Activated CD4-positive, alpha-beta memory T cell treated with anti-CD3 and anti-CD28 coated beads for 36 hours (primary cell): ENCODE measurements at regions of chr20 and their contacts with region 1.

Region 1: DNA sequence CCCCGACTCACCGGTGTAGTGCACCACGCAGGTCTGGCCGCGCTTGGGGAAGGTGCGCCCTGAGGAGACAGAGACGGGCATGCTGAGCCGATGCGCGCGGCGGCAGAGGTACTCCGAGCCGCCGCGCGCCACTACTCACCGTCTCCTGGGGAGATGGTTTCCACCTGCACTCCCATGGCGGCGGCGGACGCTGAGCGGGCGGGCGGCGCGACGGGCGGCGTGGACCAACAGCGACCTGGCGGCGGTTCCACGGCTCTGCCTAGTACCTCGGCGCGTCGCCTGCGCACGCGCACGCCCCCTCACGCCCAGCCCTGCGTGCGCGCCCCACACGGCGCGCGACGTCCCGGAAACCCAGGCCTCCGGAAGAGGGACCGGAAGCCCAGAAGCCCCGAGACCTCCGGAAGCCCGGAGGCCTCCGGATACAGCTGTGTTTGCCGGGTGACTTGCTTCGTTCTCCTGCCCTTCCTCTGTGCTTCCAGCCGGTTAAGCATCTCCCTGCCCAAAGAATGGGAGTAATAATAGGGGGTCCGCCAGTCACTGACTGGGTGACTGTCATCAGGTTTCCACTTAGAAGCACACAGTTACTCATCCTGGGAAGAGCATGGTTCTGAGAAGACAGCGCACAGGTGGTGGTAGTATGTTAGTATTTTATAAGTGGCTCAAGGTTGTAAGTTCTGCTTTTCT is at the start of gene FKBP1A:
- DNase-seq: peak; percentile 95
- H3K4me3 Mint-ChIP-seq: peak within 1 kb of the TSS; percentile 94
- H3K27ac Mint-ChIP-seq: peak within 1 kb of the TSS; percentile 92
- H3K4me1 Mint-ChIP-seq: peaks cover 49% of the 10 kb centered on the region
- H3K27me3 Mint-ChIP-seq: no peaks in the 10 kb centered on the region
- total RNA-seq, gene FKBP1A: 247 to 252 TPM

Region 2: GRCh38 chr20:1118336-1119127 is 274.4 kb before region 1 on chr20 and contains the start of gene PSMF1:
- CTCF ChIA-PET with region 1: no interaction called
- POLR2A ChIA-PET with region 1: no interaction called
- intact Hi-C with region 1: loop called (anchors 1 kb)
- DNase-seq: peak; percentile 97
- H3K4me3 Mint-ChIP-seq: peak within 1 kb of the TSS; percentile 89
- H3K27ac Mint-ChIP-seq: peak within 1 kb of the TSS; percentile 84
- H3K4me1 Mint-ChIP-seq: peaks cover 57% of the 10 kb centered on the region
- H3K27me3 Mint-ChIP-seq: no peaks in the 10 kb centered on the region
- total RNA-seq, gene PSMF1: 140 to 149 TPM

Region 3: GRCh38 chr20:1266167-1266973 is 126.6 kb before region 1 on chr20 and contains the start of gene SNPH:
- CTCF ChIA-PET with region 1: no interaction called
- POLR2A ChIA-PET with region 1: no interaction called
- intact Hi-C with region 1: loop called (anchors 5 kb)
- DNase-seq: peak; percentile 86
- H3K4me3 Mint-ChIP-seq: peak within 1 kb of the TSS; percentile 89
- H3K27ac Mint-ChIP-seq: peak within 1 kb of the TSS; percentile 85
- H3K4me1 Mint-ChIP-seq: peaks cover 42% of the 10 kb centered on the region
- H3K27me3 Mint-ChIP-seq: no peaks in the 10 kb centered on the region
- total RNA-seq, gene SNPH: 3.4 to 4.3 TPM

Region 4: GRCh38 chr20:1325173-1326030 is 67.6 kb before region 1 on chr20:
- CTCF ChIA-PET with region 1: interaction called, 10 read pairs
- POLR2A ChIA-PET with region 1: interaction called, 27 read pairs
- intact Hi-C with region 1: loop called (anchors 1 kb)
- DNase-seq: peak; percentile 99
- H3K4me3 Mint-ChIP-seq: no peak overlapping the region
- H3K27ac Mint-ChIP-seq: no peak overlapping the region
- H3K4me1 Mint-ChIP-seq: peaks cover 23% of the 10 kb centered on the region
- H3K27me3 Mint-ChIP-seq: no peaks in the 10 kb centered on the region

Region 5: DNA sequence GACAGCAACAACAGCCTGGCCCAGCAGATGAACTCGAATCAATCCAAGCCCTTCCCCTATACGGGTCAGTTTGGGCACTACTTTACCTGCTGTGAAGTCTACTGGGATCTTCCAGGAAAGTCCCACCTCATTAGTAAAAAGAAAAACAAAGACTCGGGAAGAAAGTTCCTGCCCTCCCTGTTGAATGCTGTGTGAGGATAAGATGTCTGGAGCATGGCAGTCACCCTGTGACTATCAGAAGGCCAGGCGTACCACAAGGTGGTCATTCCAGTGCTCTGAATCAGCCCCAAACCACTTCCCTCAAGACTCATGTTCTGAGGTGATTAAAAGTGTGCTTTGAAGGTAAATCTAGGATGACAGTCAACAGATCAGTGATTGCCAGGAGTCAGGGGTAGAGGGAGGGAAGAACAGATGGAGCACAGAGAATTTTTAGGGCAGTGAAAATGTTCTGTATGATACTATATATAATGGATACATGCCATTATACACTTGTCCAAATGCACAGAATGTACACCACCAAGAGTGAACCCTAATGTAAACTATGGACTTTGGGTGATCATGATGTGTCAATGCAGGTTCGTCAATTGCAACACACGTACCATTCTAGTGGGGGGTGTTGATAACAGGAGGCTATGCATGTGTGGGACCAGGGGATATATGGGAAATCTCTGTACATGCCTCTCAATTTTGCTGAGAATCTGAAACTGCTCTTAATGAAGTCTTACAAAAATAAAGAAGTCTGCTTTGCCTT is 14.8 kb before region 1 on chr20:
- CTCF ChIA-PET with region 1: interaction called, 7 read pairs
- POLR2A ChIA-PET with region 1: interaction called, 13 read pairs
- intact Hi-C with region 1: loop called (anchors 1 kb)
- DNase-seq: peak; percentile 66
- H3K4me3 Mint-ChIP-seq: peak overlapping the region; percentile 34
- H3K27ac Mint-ChIP-seq: peak overlapping the region; percentile 95
- H3K4me1 Mint-ChIP-seq: peaks cover 84% of the 10 kb centered on the region
- H3K27me3 Mint-ChIP-seq: no peaks in the 10 kb centered on the region

Region 6: DNA sequence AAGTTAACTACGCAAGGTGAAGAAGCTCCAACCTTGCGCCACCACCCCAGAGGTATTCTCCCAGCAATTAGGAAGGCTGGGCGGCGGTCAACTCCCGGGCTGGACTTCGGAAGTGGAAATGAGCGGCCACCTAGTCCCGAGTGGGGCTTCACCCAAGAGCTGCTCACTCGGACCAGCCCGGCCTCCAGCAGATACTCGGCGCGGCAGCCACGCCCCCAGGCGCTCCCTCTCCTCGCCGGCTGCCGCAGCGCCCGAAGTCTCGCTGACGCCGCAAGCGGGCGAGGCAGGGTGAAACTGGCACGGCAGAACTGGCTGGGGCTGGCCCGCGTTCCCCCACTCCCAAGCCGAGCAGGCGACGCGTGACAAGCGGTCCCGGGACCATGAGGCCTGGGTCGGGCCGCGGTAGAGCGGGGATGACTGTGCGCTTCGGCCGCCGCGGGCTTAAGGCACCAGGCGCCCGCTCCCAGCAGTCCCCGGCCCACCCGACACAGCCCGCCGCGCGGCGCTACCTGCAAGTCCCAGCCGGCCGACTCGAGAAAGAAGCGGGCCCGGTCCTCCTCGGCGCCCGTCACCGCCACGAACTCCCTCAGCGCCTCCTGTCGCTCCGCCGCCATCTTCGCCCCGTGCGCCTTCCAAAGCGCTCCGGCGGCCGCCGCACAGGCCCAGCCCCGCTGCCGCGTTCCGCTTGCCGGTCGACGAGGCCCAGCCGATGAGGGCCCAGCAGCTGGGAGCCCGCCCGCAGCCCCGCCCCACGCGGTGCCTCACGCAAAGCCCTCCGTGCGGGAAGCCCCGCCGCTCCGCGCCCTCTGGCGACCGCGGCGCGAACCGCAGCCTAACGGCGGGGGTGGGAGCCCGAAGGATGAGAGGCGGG is 73.5 kb after region 1 on chr20 and contains the start of gene NSFL1C:
- CTCF ChIA-PET with region 1: interaction called, 9 read pairs
- POLR2A ChIA-PET with region 1: interaction called, 4 read pairs
- intact Hi-C with region 1: loop called (anchors 2 kb)
- DNase-seq: peak; percentile 98
- H3K4me3 Mint-ChIP-seq: peak within 1 kb of the TSS; percentile 82
- H3K27ac Mint-ChIP-seq: peak within 1 kb of the TSS; percentile 77
- H3K4me1 Mint-ChIP-seq: peaks cover 38% of the 10 kb centered on the region
- H3K27me3 Mint-ChIP-seq: peaks cover 6% of the 10 kb centered on the region
- total RNA-seq, gene NSFL1C: 81.8 to 83.1 TPM